ENCODE measurements at regions of chr6 and their contacts with region 1.

Region 1: GRCh38 chr6:32692019-32692418 is 25.6 kb upstream of the HLA-DQB1 start:
- H3K4me3 ChIP-seq: no peak overlapping the region
- H3K27ac ChIP-seq: no peak overlapping the region
- H3K4me1 ChIP-seq: no peaks in the 10 kb centered on the region
- CTCF ChIP-seq: 0 out of 2 replicates have a peak, but pooled peaks have one; percentile 22

Region 2: DNA sequence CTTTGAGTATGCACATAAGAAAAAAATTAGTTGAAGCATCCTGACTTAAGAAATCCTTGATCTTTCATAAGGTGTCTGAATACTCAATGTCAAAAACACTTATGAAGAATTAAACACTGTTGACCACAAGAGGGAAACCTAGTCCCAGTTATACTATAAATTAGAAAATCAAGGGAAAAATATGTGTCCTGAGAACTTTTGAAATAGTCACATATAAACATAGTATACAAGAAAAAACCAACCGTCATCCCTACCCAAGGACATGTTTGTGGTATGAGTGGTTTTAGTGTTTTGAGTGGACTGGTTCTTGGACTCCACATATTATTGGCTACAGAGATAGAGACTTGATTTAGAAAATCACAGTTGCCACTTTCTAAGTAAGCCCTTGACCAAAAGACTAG is 260.0 kb before region 1 on chr6:
- CTCF ChIA-PET with region 1: interaction called, 24 read pairs
- POLR2A ChIA-PET with region 1: no interaction called
- H3K4me3 ChIP-seq: no peak overlapping the region
- H3K27ac ChIP-seq: no peak overlapping the region
- H3K4me1 ChIP-seq: no peaks in the 10 kb centered on the region
- CTCF ChIP-seq: no peak

Region 3: DNA sequence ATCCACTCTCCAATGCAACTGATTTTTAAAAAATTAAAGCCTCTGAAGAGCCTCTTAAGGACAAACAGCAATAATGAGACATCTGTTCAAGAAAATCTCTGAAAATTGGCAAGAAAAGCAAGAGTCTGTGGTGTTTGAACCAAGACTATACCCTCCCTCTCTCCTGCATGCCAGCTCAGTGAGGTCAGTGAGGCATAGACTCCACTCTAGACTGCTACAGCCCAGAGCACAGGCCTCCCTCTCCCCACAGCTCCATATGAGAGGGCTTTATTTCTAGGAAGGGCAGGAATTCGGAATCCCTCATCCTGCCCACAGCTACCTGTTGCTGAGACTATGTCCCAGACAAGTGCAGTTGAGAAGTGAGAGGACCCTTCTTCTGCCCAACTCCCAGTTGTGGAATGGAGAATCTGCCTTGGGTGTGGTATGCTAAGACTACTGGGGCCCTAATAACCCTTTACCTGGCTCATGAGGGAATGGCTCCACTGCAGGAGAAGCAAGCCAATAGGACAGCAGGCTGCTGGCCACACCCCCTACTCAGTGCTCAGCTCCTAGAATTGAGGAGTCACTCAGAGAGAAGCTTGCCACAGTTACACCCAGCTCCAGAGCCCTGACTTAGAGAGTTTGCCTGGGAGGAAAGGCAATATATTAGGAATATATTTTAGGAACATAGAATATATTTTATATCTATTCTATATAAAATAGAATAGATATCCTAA is 77.5 kb before region 1 on chr6:
- CTCF ChIA-PET with region 1: interaction called, 12 read pairs
- POLR2A ChIA-PET with region 1: no interaction called
- H3K4me3 ChIP-seq: no peak overlapping the region
- H3K27ac ChIP-seq: no peak overlapping the region
- H3K4me1 ChIP-seq: no peaks in the 10 kb centered on the region
- CTCF ChIP-seq: no peak

Region 4: GRCh38 chr6:32627831-32628230 is 64.2 kb before region 1 on chr6:
- CTCF ChIA-PET with region 1: interaction called, 97 read pairs
- POLR2A ChIA-PET with region 1: interaction called, 5 read pairs
- H3K4me3 ChIP-seq: no peak overlapping the region
- H3K27ac ChIP-seq: no peak overlapping the region
- H3K4me1 ChIP-seq: peaks cover 18% of the 10 kb centered on the region
- CTCF ChIP-seq: no peak

Region 5: GRCh38 chr6:32679492-32679891 is 12.5 kb before region 1 on chr6:
- CTCF ChIA-PET with region 1: interaction called, 10 read pairs
- POLR2A ChIA-PET with region 1: no interaction called
- H3K4me3 ChIP-seq: no peak overlapping the region
- H3K27ac ChIP-seq: no peak overlapping the region
- H3K4me1 ChIP-seq: no peaks in the 10 kb centered on the region
- CTCF ChIP-seq: no peak

Region 6: DNA sequence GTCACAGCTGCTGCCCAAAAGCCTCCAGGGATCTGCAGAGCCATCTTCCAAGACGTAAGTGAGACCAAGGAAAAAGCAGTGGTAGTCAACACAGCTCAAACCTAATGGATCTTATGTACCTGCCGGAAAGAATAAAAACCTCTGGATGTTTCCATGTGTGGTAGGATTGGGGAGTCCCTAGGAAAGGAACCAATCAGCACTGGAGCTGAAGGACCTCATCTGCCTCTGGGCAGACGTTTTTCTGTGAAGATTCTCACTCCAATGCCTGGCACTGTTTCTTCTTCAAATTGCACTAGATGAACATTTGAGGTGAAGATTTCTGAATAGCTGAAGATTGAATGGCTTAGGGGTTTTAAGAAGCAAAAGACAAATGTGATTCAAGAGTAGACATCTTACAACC is 71.4 kb after region 1 on chr6 and contains the start of gene HLA-DQB2:
- CTCF ChIA-PET with region 1: no interaction called
- POLR2A ChIA-PET with region 1: no interaction called
- H3K4me3 ChIP-seq: no peak within 1 kb of the TSS
- H3K27ac ChIP-seq: no peak within 1 kb of the TSS
- H3K4me1 ChIP-seq: no peaks in the 10 kb centered on the region
- CTCF ChIP-seq: no peak